Endothelial cell of umbilical vein (primary cell): ENCODE measurements at regions of chr1 and their contacts with region 1.

Region 1: GRCh38 chr1:33295450-33296081 is 25.3 kb downstream of the A3GALT2 start:
- DNase-seq: peak; percentile 39
- H3K4me3 ChIP-seq: no peak overlapping the region
- H3K27ac ChIP-seq: no peak overlapping the region
- H3K4me1 ChIP-seq: no peaks in the 10 kb centered on the region
- H3K27me3 ChIP-seq: no peaks in the 10 kb centered on the region
- CTCF ChIP-seq: peak; percentile 84 to 86
- POLR2A ChIP-seq: no peak

Region 2: DNA sequence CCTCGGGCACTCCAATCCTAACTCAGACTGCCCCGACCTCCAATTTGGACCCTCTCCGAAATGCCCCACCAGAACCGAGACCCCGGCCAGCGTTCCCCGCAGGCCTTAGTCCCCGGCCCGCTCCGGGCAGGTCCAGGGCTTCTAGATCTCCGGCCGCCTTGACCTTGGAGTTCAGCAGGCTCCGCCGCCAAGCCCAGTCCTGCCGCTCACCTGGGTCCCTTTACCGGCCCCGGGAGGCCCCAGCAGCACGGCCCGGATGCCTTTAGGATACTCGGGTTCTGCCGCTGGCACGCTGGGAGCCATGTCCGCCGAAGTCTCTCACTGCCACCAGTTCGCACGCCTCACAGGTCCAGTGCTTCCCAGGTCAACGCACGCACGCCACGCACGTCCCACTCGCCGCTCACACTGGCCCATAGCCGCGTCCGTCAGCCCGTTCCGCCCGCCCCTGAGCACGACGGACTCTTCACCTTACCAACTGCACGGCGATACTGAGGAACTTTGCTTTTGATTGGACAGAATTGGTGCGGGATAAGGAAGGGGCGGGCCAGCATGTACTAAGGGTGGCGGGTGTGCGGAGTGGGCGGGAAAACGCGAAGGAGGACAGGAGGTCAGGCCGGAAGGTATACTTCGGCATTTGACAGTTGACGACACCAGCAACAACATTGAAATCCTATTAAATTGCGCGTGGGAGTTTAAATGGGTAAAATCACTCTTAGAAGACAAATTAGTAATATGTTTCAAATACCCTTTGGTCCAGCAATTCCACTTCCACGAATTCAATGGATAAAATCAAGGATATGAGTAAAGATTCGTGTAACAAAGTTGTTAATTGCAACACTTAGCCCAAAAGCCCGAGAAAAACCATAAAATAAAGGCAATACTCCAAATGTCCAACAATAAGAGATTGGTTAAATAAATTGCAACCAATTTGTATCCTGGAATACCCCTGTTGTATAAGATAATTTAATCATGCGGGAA is 258.8 kb before region 1 on chr1 and contains the start of gene AK2:
- CTCF ChIA-PET with region 1: no interaction called
- POLR2A ChIA-PET with region 1: no interaction called
- dilution Hi-C with region 1: no loop called
- intact Hi-C with region 1: no loop called
- DNase-seq: peak; percentile 99
- H3K4me3 ChIP-seq: peak within 1 kb of the TSS; percentile 56 to 77 (median 65)
- H3K27ac ChIP-seq: peak within 1 kb of the TSS; percentile 52
- H3K4me1 ChIP-seq: peaks cover 15% of the 10 kb centered on the region
- H3K27me3 ChIP-seq: no peaks in the 10 kb centered on the region
- CTCF ChIP-seq: no peak
- POLR2A ChIP-seq: peak; percentile 18
- total RNA-seq, gene AK2: 131 and 134 TPM in 2 replicates

Region 3: DNA sequence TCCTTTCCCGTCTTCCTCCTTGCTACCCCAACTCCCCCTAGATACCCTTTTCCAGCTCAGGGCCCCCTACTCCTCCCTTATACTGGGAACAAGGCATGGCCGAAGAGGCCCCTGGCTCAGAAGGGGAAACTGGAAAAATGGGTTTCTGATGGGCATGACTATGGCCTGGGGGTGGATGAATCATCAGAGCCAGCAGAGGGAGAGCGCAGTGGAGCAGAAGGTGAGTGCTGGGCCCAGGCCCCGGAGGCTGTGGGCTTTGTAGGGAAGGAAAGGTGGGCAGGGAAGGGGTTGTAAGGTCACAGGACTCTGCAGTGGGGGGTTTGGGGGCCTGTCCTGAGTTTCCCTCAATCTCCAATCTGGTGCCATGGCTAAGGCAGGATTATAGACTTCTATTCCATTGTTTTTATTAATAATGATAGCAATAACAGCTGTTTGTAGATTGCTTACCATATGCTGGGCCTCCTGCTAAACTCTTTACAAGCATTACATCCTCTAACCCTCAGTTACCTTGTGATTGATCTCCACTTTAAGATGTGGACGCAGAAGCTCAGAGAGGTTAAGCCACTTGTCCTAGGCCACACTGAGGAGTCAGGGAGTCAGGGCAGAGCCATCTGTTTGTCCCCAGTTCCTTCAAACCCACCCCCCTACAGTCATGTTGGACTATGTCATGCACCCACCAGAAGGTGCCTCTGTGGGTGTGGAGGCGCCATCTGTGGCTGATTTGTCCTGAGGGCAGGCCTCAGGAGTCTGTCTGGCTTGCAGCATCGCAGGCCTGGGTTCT is 75.5 kb before region 1 on chr1:
- CTCF ChIA-PET with region 1: interaction called, 57 read pairs
- POLR2A ChIA-PET with region 1: no interaction called
- dilution Hi-C with region 1: no loop called
- intact Hi-C with region 1: loop called (anchors 1 kb)
- DNase-seq: no peak
- H3K4me3 ChIP-seq: no peak overlapping the region
- H3K27ac ChIP-seq: no peak overlapping the region
- H3K4me1 ChIP-seq: peaks cover 5% of the 10 kb centered on the region
- H3K27me3 ChIP-seq: peaks cover 3 to 12% of the 10 kb centered on the region in 2 experiments
- CTCF ChIP-seq: no peak
- POLR2A ChIP-seq: no peak

Region 4: GRCh38 chr1:33306648-33307493 is 11.3 kb after region 1 on chr1:
- CTCF ChIA-PET with region 1: interaction called, 16 read pairs
- POLR2A ChIA-PET with region 1: no interaction called
- dilution Hi-C with region 1: no loop called
- intact Hi-C with region 1: no loop called
- DNase-seq: peak; percentile 38
- H3K4me3 ChIP-seq: peak overlapping the region in 1 of 3 experiments; percentile 15
- H3K27ac ChIP-seq: no peak overlapping the region
- H3K4me1 ChIP-seq: peaks cover 2% of the 10 kb centered on the region
- H3K27me3 ChIP-seq: peaks cover 0 to 9% of the 10 kb centered on the region in 2 experiments
- CTCF ChIP-seq: no peak
- POLR2A ChIP-seq: no peak

Region 5: DNA sequence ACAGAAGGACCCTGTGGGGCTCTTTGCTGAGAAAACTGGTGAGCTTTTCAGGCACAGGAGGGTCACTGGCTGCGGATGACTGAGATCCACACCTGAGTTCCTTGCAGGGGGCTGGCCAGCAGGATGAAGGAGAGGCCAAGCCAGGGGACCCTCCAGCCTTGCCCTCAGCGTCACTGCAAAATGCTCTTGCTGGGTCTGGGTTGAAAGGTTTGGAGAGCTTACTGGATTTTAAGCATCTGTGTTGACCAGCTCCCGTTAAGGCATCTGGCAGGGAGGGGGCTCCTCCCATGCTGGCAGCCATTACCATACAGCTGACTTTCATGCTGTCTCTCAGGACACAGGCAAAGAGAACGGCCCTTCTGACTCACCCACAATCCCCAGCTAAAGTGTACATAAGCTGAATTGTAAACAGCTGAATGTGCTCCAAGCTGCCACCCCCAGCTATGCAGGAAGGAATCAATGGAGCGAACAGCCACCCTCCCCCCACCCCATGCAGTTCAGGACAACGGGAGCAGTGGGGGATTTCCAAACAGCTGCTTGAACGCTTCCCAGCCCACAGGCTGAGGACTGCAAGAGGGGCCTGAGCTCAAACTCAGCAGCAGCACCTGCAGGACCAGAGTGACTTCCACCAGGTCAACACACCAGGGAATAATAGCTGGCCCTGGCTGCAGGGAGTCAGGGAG is 46.6 kb after region 1 on chr1:
- CTCF ChIA-PET with region 1: interaction called, 15 read pairs
- POLR2A ChIA-PET with region 1: interaction called, 3 read pairs
- dilution Hi-C with region 1: no loop called
- intact Hi-C with region 1: loop called (anchors 1 kb)
- DNase-seq: peak; percentile 97
- H3K4me3 ChIP-seq: no peak overlapping the region
- H3K27ac ChIP-seq: peak overlapping the region; percentile 56
- H3K4me1 ChIP-seq: peaks cover 85% of the 10 kb centered on the region
- H3K27me3 ChIP-seq: no peaks in the 10 kb centered on the region
- CTCF ChIP-seq: no peak
- POLR2A ChIP-seq: no peak

Region 6: DNA sequence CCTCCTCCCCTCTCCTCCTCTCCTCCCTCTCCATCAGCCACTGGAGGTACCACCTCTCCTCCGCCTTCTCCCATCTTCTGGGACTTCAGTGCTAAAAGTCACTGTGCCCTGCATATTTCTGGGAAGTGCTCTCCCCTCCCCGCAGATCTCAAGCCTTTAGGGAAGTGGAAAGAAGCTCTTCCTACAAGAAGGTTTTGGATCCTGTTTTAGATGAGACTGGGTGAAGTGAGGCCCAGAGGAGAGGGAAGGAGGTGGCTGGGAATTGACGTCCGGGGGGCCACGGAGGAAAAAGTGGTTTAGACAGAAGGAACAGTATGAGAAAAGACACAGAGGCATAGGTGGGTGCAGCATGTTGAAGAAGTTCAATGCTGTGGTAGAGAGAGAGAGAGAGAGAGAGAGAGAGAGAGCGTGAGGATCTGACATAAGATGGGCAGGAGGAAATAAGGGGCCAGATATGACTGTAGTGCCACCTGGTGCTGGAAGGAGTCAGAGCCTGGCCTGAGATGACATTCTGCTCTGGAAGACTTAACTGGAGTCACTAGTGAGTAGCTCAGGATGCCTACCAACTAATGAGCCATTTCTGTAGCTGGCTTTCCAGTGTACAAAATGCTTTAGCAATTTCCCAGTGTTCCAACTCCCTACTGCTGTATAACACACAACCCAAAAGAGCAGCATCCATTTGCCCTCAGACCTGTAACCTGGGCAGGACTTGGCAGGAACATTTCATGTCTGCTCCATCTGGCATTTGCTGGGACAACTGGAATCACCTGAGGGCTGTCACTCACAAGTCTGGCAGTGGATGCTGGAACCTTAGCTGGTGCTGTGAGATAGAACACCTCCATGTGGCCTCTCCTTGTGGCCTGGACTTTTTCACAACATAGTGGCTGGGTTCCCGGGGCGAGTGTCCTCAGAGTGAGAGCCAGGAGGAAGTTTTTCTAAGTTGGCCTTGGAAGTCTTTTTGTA is 160.3 kb after region 1 on chr1:
- CTCF ChIA-PET with region 1: interaction called, 15 read pairs
- POLR2A ChIA-PET with region 1: interaction called, 8 read pairs
- dilution Hi-C with region 1: no loop called
- intact Hi-C with region 1: loop called (anchors 1 kb)
- DNase-seq: peak; percentile 67
- H3K4me3 ChIP-seq: no peak overlapping the region
- H3K27ac ChIP-seq: no peak overlapping the region
- H3K4me1 ChIP-seq: peaks cover 10% of the 10 kb centered on the region
- H3K27me3 ChIP-seq: no peaks in the 10 kb centered on the region
- CTCF ChIP-seq: peak; percentile 68 to 69
- POLR2A ChIP-seq: no peak

Region 7: DNA sequence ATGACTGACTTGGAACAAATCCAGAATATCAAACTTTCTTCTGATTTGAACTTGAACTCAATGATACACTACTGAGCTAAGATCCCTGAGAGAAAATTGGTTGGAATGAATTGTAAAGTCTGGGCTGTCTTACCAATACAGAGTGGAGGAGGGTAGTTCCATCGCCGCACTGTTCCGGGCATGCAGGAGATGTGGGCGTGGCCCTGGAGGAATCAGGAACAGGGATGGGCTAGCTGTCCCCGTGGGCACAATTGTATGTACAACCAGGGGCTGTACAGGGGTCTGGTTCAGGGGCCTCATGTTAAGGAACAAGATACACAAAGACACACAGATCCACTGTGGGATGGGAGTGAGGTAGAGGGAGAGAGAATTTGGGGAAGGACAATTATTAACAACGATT is 321.2 kb after region 1 on chr1:
- CTCF ChIA-PET with region 1: interaction called, 21 read pairs
- POLR2A ChIA-PET with region 1: no interaction called
- dilution Hi-C with region 1: no loop called
- intact Hi-C with region 1: loop called (anchors 5 kb)
- DNase-seq: no peak
- H3K4me3 ChIP-seq: no peak overlapping the region
- H3K27ac ChIP-seq: no peak overlapping the region
- H3K4me1 ChIP-seq: no peaks in the 10 kb centered on the region
- H3K27me3 ChIP-seq: no peaks in the 10 kb centered on the region
- CTCF ChIP-seq: no peak
- POLR2A ChIP-seq: no peak

Region 8: GRCh38 chr1:33972676-33973395 is 677.3 kb after region 1 on chr1:
- CTCF ChIA-PET with region 1: no interaction called
- POLR2A ChIA-PET with region 1: no interaction called
- dilution Hi-C with region 1: no loop called
- intact Hi-C with region 1: no loop called
- DNase-seq: no peak
- H3K4me3 ChIP-seq: no peak overlapping the region
- H3K27ac ChIP-seq: no peak overlapping the region
- H3K4me1 ChIP-seq: no peaks in the 10 kb centered on the region
- H3K27me3 ChIP-seq: no peaks in the 10 kb centered on the region
- CTCF ChIP-seq: no peak
- POLR2A ChIP-seq: no peak